ENCODE measurements at regions of chr11 and their contacts with region 1.

Region 1: GRCh38 chr11:102346748-102347461 is at the start of gene BIRC2:
- DNase-seq: peak; percentile 82 to 97 (median 94)
- H3K4me3 ChIP-seq: peak within 1 kb of the TSS; percentile 69 to 98 (median 87)
- H3K27ac ChIP-seq: peak within 1 kb of the TSS; percentile 52 to 99 (median 98)
- H3K27me3 ChIP-seq: no peaks in the 10 kb centered on the region
- CTCF ChIP-seq: peak; percentile 30 to 90 (median 76)
- total RNA-seq, gene BIRC2: 29.0 to 61.1 (median 39.8) TPM

Region 2: DNA sequence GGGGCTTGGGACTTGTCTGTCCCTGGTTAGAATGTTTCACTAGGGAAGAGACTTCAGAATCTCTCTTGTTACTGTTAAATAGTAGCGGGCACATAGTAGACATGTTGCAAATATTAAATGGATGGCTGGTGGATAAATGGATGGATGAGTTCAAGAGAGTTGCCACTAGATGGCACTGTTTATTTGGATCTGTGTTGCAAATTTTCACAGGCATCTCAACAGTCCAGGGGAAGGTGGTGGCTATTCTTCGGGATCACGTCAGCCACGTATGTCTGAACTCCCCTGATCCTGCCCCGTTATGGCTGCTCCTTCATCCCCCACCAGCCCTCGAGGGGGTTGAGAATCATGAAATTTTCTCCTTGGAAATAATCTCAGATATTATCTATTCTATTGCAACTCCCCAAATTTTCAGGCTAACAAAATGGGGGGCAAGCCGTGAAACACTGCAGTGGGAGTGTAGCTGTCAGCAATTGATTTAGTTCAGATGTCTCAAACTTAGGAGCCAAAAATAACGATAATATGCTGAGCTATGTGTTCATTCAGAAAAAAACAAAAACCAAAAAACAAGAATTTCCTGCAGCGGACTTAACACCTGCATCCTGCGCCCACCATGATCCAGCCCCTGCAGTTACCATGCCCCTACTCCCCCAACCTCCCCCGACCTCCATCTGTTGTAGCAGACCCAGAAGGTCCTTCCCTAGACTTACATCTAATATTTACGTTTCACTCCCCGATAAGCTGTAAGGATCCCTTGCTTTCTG is 58.8 kb before region 1 on chr11:
- intact Hi-C with region 1: loop called (anchors 2 to 5 kb)
- DNase-seq: peak in 2 of 10 donors; percentile 28 to 45
- H3K4me3 ChIP-seq: peak overlapping the region in 54 of 59 donors; percentile 13 to 62 (median 43)
- H3K27ac ChIP-seq: peak overlapping the region in 4 of 59 donors; percentile 25 to 65 (median 37)
- H3K27me3 ChIP-seq: no peaks in the 10 kb centered on the region
- CTCF ChIP-seq: peak; percentile 68 to 91 (median 82)

Region 3: DNA sequence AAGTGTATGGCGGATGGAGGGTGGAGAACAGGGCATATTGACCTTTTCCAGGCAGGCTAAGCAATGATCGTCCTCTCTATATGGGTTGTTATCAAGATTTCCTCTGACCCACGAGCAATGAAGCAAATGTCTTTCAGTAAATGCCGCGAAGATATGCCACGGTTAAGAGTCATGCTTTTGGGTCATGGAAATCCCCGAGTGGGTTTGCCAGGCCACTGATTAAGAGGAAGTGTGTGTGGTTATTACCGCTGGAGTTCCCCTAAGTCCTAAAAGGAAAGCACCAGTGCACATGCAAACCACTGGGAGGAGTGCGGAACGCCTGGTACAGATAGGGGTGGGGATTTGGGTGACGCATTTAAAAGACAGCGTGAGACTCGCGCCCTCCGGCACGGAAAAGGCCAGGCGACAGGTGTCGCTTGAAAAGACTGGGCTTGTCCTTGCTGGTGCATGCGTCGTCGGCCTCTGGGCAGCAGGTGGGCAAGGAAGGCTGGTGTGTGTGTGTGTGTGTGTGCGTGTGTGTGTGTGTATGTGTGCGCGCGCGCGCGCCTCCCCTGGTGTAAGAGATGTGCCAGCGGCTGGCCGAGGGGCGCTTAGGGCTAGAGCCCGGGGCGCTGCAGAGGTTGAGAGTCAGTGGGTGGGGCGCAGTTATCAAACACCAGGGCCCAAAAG is 29.7 kb before region 1 on chr11 and contains the start of gene BIRC3:
- intact Hi-C with region 1: loop called in 1 of 2 experiments (anchors 2 kb)
- DNase-seq: peak in 9 of 10 donors; percentile 55 to 68 (median 64)
- H3K4me3 ChIP-seq: peak within 1 kb of the TSS; percentile 38 to 78 (median 66)
- H3K27ac ChIP-seq: peak within 1 kb of the TSS in 39 of 59 donors; percentile 0 to 78 (median 31)
- H3K27me3 ChIP-seq: no peaks in the 10 kb centered on the region
- CTCF ChIP-seq: peak in 27 of 56 donors; percentile 6 to 52 (median 25)
- total RNA-seq, gene BIRC3: 1.5 to 9.7 (median 3.6) TPM

Region 4: DNA sequence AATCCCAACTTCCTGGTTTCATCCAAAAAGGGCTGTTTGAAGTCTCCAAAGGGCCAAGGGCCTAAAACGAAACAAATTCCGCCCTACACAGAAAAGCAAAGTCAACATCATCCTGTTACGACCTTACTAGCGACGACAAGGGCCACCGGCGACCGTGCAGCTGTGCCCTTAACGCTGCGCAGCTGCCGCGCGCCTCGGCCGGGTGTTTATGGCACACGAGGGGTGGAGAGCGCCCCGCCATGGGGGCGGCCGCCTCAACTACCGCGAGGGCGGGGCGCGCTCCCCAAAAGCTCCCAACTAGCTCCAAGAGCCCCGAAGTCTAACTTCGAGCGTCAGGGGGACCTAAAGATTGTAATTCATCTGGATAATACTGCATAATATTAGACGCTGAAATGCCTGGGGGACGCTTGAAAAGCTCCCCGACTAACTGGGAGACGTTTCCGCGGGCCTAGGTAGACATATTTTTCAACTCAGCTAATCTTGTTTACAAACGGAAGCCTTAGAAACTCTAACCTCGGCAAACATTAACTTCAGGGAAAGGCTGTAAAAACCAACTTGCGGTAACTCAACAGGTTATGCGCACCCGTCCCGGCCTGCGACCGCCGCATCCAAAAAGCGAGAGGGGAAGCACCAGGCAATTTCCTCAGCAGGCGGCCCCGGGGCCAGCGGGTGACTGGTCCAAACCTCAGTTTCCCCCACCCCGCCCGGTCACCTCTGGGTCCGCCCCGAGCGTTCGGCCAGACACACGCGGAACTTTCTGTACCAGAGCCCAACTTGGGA is 105.0 kb after region 1 on chr11:
- intact Hi-C with region 1: loop called (anchors 1 to 5 kb)
- DNase-seq: peak; percentile 8 to 77 (median 62)
- H3K4me3 ChIP-seq: peak overlapping the region; percentile 66 to 97 (median 82)
- H3K27ac ChIP-seq: peak overlapping the region; percentile 45 to 99 (median 92)
- H3K27me3 ChIP-seq: peaks cover 0 to 6% (median 0%) of the 10 kb centered on the region in 45 donors
- CTCF ChIP-seq: peak in 51 of 56 donors; percentile 13 to 65 (median 41)

Region 5: GRCh38 chr11:102513869-102514268 is 167.0 kb after region 1 on chr11:
- intact Hi-C with region 1: no loop called
- DNase-seq: peak in 1 of 10 donors; percentile 6
- H3K4me3 ChIP-seq: no peak overlapping the region
- H3K27ac ChIP-seq: no peak overlapping the region
- H3K27me3 ChIP-seq: no peaks in the 10 kb centered on the region
- CTCF ChIP-seq: no peak

Region 6: DNA sequence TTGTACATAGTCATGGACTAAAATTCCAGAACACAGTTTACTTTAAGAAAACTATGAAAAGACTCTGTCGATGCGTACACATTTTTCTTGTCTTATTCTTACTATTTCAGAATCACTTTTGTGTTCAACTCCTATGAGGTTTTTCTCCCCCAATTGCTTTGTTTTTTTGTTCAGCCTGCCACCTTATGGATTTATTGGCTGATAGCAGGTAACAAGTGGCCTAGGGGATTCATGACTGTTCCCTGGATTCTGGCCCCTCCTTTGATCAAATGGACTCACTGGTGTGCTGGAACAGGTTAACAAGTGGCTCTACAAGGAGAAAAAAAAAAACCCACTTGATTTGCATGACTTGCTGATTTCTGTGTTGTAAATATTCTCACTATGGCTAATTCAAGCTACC is 267.6 kb after region 1 on chr11:
- intact Hi-C with region 1: loop called in 1 of 2 experiments (anchors 10 kb)
- DNase-seq: no peak
- H3K4me3 ChIP-seq: no peak overlapping the region
- H3K27ac ChIP-seq: no peak overlapping the region
- H3K27me3 ChIP-seq: no peaks in the 10 kb centered on the region
- CTCF ChIP-seq: peak in 4 of 56 donors; percentile 13 to 28 (median 22)

Region 7: DNA sequence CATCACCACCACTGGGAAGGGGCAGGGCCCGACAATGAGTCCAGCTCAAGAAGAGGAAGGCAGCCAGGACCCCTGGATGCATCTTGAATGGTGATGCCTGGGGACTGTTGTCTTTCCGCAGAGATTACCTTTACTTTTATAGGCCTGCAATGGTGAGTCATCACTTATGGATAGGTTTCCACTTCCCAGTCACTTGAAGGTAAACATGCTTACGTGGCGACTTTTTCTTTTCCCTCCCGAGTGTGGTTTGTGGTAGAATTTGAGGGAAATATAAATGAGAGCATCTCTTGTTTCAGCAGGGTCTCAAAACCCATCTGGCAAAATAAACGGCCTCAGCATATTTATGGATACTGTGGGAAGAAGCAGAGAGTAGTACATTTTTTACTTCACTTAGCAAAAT is 608.7 kb after region 1 on chr11 and contains the start of gene MMP13:
- intact Hi-C with region 1: no loop called
- DNase-seq: no peak
- H3K4me3 ChIP-seq: no peak within 1 kb of the TSS
- H3K27ac ChIP-seq: no peak within 1 kb of the TSS
- H3K27me3 ChIP-seq: no peaks in the 10 kb centered on the region
- CTCF ChIP-seq: no peak
- total RNA-seq, gene MMP13: not detected